GM18951 (cell line): ENCODE measurements at regions of chr1 and their contacts with region 1.

Region 1: GRCh38 chr1:15328351-15329103 is 81.2 kb upstream of the EFHD2 start:
- POLR2A ChIP-seq: no peak

Region 2: GRCh38 chr1:15426492-15427279 is 98.2 kb after region 1 on chr1:
- in situ Hi-C with region 1: loop called (anchors 5 kb)
- POLR2A ChIP-seq: no peak